Prostate gland (tissue), 2 donors: ENCODE measurements at regions of chr3 and their contacts with region 1.

Region 1: DNA sequence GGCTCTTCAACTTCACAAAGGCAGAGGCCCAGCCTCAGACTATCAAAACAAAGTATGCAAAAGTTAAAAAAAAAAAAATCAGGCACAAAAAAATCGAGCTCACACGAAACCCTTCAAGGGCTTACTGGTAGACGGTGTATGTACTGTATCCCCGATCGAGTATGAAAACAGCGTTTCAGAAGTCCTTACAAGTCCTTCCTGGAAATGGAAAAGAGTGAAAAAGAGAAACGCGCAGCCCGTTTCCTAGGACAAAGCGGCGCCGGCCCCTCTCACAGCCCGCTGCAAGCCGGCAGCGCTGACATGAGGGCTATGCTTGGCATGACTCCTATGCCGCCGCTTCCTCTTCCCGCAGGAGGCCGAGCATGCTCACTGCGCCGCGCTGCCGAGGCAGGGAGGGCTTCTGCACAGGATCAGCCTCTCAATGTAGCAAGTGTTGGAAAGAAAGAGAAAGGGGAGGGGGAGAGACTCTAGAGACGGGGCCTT is at the start of gene VGLL4:
- DNase-seq: peak; percentile 88
- H3K4me3 ChIP-seq: peak within 1 kb of the TSS; percentile 52 to 60
- H3K27ac ChIP-seq: peak within 1 kb of the TSS; percentile 90 to 95
- H3K4me1 ChIP-seq: peaks cover 7% of the 10 kb centered on the region
- H3K27me3 ChIP-seq: no peaks in the 10 kb centered on the region
- CTCF ChIP-seq: peak in 2 of 4 experiments; percentile 4 to 29
- POLR2A ChIP-seq: peak; percentile 70
- total RNA-seq, gene VGLL4: 87.2 to 203 TPM

Region 2: GRCh38 chr3:11465744-11466616 is 177.7 kb before region 1 on chr3:
- intact Hi-C with region 1: loop called (anchors 5 kb)
- DNase-seq: peak; percentile 13
- H3K4me3 ChIP-seq: no peak overlapping the region
- H3K27ac ChIP-seq: peak overlapping the region; percentile 37 to 59
- H3K4me1 ChIP-seq: no peaks in the 10 kb centered on the region
- H3K27me3 ChIP-seq: no peaks in the 10 kb centered on the region
- CTCF ChIP-seq: no peak
- POLR2A ChIP-seq: no peak

Region 3: GRCh38 chr3:11482021-11482420 is 161.6 kb before region 1 on chr3:
- intact Hi-C with region 1: loop called (anchors 5 kb)
- DNase-seq: no peak
- H3K4me3 ChIP-seq: no peak overlapping the region
- H3K27ac ChIP-seq: peak overlapping the region; percentile 61 to 66
- H3K4me1 ChIP-seq: peaks cover 12% of the 10 kb centered on the region
- H3K27me3 ChIP-seq: no peaks in the 10 kb centered on the region
- CTCF ChIP-seq: no peak
- POLR2A ChIP-seq: no peak

Region 4: GRCh38 chr3:11601446-11602238 is 42.0 kb before region 1 on chr3:
- intact Hi-C with region 1: loop called (anchors 5 kb)
- DNase-seq: peak; percentile 46
- H3K4me3 ChIP-seq: no peak overlapping the region
- H3K27ac ChIP-seq: peak overlapping the region; percentile 39 to 71
- H3K4me1 ChIP-seq: peaks cover 17% of the 10 kb centered on the region
- H3K27me3 ChIP-seq: no peaks in the 10 kb centered on the region
- CTCF ChIP-seq: no peak
- POLR2A ChIP-seq: no peak

Region 5: GRCh38 chr3:11826628-11827265 is 183.1 kb after region 1 on chr3:
- intact Hi-C with region 1: no loop called
- DNase-seq: no peak
- H3K4me3 ChIP-seq: no peak overlapping the region
- H3K27ac ChIP-seq: no peak overlapping the region
- H3K4me1 ChIP-seq: no peaks in the 10 kb centered on the region
- H3K27me3 ChIP-seq: no peaks in the 10 kb centered on the region
- CTCF ChIP-seq: no peak
- POLR2A ChIP-seq: no peak